AG04449 (cell line): ENCODE measurements at regions of chr10 and their contacts with region 1.

Region 1: DNA sequence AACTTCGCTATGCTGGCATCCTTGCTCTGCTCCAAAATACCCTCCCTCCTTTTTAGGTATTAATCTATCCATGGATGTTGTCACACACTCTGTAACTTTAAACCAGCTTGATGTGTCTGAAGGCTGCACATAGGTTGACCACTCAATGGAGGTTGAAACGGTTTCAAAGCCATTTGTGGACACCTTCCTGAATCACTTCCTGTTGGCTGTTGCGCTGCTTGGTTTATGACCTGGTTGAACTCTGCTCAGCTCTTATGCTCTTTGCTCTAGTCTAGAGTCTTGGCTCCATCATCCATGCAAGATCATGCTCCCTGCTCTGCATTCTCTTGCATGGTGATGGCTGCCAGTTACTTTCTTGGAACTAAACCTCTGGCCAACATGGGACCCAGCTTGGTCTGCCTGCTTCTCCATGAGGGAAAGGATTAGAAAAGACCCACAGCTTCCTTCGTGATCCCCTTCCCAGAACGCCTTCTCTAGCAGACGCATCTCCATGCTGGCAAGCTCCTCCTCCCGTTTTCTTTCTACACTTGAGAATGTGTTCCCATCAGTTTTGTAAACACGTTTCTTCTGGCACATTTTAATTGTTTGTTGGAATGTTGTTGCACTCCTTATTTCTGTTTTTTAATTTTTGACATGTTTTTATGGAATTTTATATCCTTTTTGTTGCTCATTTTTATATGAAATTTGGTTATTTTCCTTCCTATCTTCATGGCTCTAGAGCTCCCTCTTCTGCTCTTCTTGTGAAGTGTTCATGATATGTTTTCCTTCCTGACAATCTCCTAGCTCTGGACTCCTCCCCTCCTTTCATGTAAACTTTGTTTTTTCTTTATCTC is 149.8 kb downstream of the XPNPEP1 start:
- DNase-seq: no peak
- H3K4me3 ChIP-seq: no peak overlapping the region
- CTCF ChIP-seq: peak; percentile 51

Region 2: DNA sequence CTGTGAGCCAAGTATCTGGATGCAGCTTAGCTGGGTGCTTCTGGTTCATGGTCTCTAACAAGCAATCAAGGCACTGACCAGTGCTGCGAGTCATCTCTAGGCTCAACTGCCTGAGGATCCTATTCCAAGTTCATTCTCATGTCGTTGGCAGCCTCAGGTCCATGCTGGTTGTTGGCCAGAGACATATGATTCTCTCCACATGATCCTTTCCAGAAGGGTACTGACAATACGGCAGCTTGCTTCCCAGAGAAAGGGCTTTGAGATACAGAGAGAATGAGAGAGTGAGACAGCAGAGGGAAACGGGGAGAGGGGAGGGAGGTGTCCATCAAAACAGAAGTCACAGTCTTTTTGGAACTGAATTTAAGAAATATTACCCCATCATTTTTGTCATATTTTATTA is 255.8 kb before region 1 on chr10:
- CTCF ChIA-PET with region 1: no interaction called
- POLR2A ChIA-PET with region 1: no interaction called
- DNase-seq: no peak
- H3K4me3 ChIP-seq: no peak overlapping the region
- CTCF ChIP-seq: no peak

Region 3: GRCh38 chr10:109784236-109784635 is 10.7 kb after region 1 on chr10:
- CTCF ChIA-PET with region 1: interaction called, 20 read pairs
- POLR2A ChIA-PET with region 1: no interaction called
- DNase-seq: peak; percentile 14
- H3K4me3 ChIP-seq: no peak overlapping the region
- CTCF ChIP-seq: no peak

Region 4: DNA sequence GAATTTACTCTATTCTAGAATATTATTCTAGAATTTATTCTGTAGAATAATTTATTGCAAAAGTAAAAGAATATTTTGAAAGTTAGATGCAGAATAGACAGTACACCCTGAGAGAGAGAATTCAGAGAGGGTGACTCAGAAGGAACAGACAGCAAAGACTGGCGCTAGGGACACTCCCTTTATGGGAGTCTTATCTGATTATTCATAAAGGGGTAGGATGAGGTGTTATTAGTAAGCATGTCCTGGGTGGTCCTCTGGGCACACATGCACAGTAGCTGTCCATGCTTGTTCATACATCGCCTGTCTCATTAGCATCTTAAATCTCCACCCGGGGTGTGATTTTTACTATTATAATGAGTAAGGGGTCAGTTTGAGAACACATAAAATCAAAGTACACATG is 49.7 kb after region 1 on chr10:
- CTCF ChIA-PET with region 1: no interaction called
- POLR2A ChIA-PET with region 1: no interaction called
- DNase-seq: no peak
- H3K4me3 ChIP-seq: no peak overlapping the region
- CTCF ChIP-seq: no peak